Activated CD4-positive, alpha-beta memory T cell treated with anti-CD3 and anti-CD28 coated beads for 36 hours (primary cell): ENCODE measurements at regions of chr2 and their contacts with region 1.

Region 1: GRCh38 chr2:170361090-170361936 is 183.4 kb downstream of the MYO3B start:
- DNase-seq: peak; percentile 71
- H3K4me3 Mint-ChIP-seq: no peak overlapping the region
- H3K27ac Mint-ChIP-seq: no peak overlapping the region
- H3K4me1 Mint-ChIP-seq: peaks cover 25% of the 10 kb centered on the region
- H3K27me3 Mint-ChIP-seq: peaks cover 22% of the 10 kb centered on the region

Region 2: GRCh38 chr2:170235860-170236679 is 125.2 kb before region 1 on chr2:
- CTCF ChIA-PET with region 1: interaction called, 3 read pairs
- POLR2A ChIA-PET with region 1: no interaction called
- intact Hi-C with region 1: loop called (anchors 2 kb)
- DNase-seq: peak; percentile 18
- H3K4me3 Mint-ChIP-seq: no peak overlapping the region
- H3K27ac Mint-ChIP-seq: no peak overlapping the region
- H3K4me1 Mint-ChIP-seq: no peaks in the 10 kb centered on the region
- H3K27me3 Mint-ChIP-seq: peaks cover 13% of the 10 kb centered on the region

Region 3: GRCh38 chr2:170409164-170409535 is 47.8 kb after region 1 on chr2:
- CTCF ChIA-PET with region 1: interaction called, 13 read pairs
- POLR2A ChIA-PET with region 1: no interaction called
- intact Hi-C with region 1: loop called (anchors 2 kb)
- DNase-seq: peak; percentile 80
- H3K4me3 Mint-ChIP-seq: no peak overlapping the region
- H3K27ac Mint-ChIP-seq: no peak overlapping the region
- H3K4me1 Mint-ChIP-seq: peaks cover 5% of the 10 kb centered on the region
- H3K27me3 Mint-ChIP-seq: peaks cover 20% of the 10 kb centered on the region

Region 4: GRCh38 chr2:170770606-170771420 is 409.5 kb after region 1 on chr2:
- CTCF ChIA-PET with region 1: interaction called, 4 read pairs
- POLR2A ChIA-PET with region 1: no interaction called
- intact Hi-C with region 1: loop called (anchors 2 kb)
- DNase-seq: peak; percentile 75
- H3K4me3 Mint-ChIP-seq: peak overlapping the region; percentile 77
- H3K27ac Mint-ChIP-seq: no peak overlapping the region
- H3K4me1 Mint-ChIP-seq: peaks cover 7% of the 10 kb centered on the region
- H3K27me3 Mint-ChIP-seq: peaks cover 14% of the 10 kb centered on the region